ENCODE measurements at regions of chr16 and their contacts with region 1.

Region 1: DNA sequence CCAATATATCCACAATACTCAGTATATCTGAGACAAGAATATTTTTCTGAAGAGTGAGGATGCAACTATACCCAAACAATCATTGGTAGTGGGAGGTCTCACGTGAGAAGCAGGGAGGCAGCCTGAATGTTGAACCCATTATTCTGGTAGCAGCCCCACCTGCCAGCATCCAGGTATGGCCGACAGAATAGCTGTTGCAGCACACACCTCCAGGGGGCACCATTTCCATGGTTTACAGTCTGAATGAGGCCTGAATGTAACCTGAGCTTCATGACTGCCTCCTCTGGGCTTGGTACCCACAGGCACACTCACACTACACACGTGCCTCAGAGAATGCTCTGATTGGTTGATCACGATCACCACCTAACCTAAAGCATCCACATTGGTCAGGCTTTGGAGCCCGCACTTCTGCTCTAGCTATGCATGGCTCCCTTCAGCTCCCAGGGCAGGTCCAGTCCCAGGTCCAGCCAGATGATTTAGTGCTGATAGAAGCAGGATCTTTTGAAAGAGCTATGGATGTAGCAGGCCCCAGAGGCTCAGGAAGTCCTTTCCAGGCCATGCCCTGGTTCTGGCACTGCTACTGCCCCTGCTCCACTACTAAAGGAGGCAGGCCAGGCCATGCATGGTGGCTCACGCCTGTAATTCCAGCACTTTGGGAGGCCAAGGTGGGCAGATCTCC is 11.0 kb upstream of the CBFB start:
- DNase-seq: peak; percentile 96
- H3K4me3 Mint-ChIP-seq: no peak overlapping the region
- H3K27ac Mint-ChIP-seq: no peak overlapping the region
- H3K4me1 Mint-ChIP-seq: peaks cover 5% of the 10 kb centered on the region
- H3K27me3 Mint-ChIP-seq: peaks cover 4% of the 10 kb centered on the region

Region 2: GRCh38 chr16:66954097-66954659 is 63.8 kb before region 1 on chr16:
- CTCF ChIA-PET with region 1: interaction called, 13 read pairs
- intact Hi-C with region 1: loop called (anchors 1 kb)
- DNase-seq: peak; percentile 90
- H3K4me3 Mint-ChIP-seq: no peak overlapping the region
- H3K27ac Mint-ChIP-seq: no peak overlapping the region
- H3K4me1 Mint-ChIP-seq: peaks cover 14% of the 10 kb centered on the region
- H3K27me3 Mint-ChIP-seq: peaks cover 27% of the 10 kb centered on the region

Region 3: GRCh38 chr16:66984892-66985311 is 33.0 kb before region 1 on chr16:
- CTCF ChIA-PET with region 1: interaction called, 22 read pairs
- intact Hi-C with region 1: loop called (anchors 2 kb)
- DNase-seq: peak; percentile 81
- H3K4me3 Mint-ChIP-seq: no peak overlapping the region
- H3K27ac Mint-ChIP-seq: peak overlapping the region; percentile 96
- H3K4me1 Mint-ChIP-seq: peaks cover 30% of the 10 kb centered on the region
- H3K27me3 Mint-ChIP-seq: no peaks in the 10 kb centered on the region

Region 4: GRCh38 chr16:67043420-67043819 is 25.5 kb after region 1 on chr16:
- CTCF ChIA-PET with region 1: interaction called, 10 read pairs
- intact Hi-C with region 1: no loop called
- DNase-seq: no peak
- H3K4me3 Mint-ChIP-seq: no peak overlapping the region
- H3K27ac Mint-ChIP-seq: no peak overlapping the region
- H3K4me1 Mint-ChIP-seq: peaks cover 28% of the 10 kb centered on the region
- H3K27me3 Mint-ChIP-seq: no peaks in the 10 kb centered on the region

Region 5: GRCh38 chr16:67109407-67110135 is 91.6 kb after region 1 on chr16 and contains the start of gene PHAF1:
- CTCF ChIA-PET with region 1: interaction called, 16 read pairs
- intact Hi-C with region 1: loop called (anchors 2 kb)
- DNase-seq: peak; percentile 95
- H3K4me3 Mint-ChIP-seq: peak within 1 kb of the TSS; percentile 94
- H3K27ac Mint-ChIP-seq: no peak within 1 kb of the TSS
- H3K4me1 Mint-ChIP-seq: peaks cover 27% of the 10 kb centered on the region
- H3K27me3 Mint-ChIP-seq: no peaks in the 10 kb centered on the region
- total RNA-seq, gene PHAF1: 7.8 to 8.4 TPM

Region 6: DNA sequence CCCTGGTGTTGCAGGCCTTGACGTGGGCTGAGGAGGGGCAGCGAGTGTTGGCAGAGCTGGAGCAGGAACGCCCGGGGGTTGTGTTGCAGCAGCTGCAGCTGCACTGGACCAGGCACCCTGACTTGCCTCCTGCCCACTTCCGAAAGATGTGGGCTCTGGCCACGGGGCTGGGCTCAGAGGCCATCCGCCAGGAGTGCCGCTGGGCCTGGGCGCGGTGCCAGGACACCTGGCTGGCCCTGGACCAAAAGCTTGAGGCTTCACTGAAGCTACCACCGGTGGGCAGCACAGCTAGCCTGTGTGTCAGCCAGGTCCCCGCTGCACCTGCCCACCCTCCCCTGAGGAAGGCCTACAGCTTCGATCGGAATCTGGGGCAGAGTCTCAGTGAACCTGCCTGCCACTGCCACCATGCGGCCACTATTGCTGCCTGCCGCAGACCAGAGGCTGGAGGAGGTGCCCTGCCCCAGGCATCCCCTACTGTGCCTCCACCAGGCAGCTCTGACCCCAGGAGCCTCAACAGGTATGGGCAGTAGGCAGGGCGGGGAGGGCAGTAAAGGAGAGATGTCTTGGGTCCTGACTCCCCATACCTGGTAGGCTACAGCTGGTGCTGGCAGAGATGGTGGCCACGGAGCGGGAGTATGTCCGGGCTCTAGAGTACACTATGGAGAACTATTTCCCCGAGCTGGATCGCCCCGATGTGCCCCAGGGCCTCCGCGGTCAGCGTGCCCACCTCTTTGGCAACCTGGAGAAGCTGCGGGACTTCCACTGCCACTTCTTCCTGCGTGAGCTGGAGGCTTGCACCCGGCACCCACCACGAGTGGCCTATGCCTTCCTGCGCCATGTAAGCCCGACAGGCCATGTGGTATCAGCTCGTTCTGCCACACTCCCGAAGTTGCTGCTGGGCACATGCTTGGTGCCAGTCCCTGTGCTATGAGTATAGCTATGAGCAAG is 267.0 kb after region 1 on chr16:
- CTCF ChIA-PET with region 1: no interaction called
- intact Hi-C with region 1: no loop called
- DNase-seq: no peak
- H3K4me3 Mint-ChIP-seq: no peak overlapping the region
- H3K27ac Mint-ChIP-seq: no peak overlapping the region
- H3K4me1 Mint-ChIP-seq: no peaks in the 10 kb centered on the region
- H3K27me3 Mint-ChIP-seq: no peaks in the 10 kb centered on the region

Region 7: DNA sequence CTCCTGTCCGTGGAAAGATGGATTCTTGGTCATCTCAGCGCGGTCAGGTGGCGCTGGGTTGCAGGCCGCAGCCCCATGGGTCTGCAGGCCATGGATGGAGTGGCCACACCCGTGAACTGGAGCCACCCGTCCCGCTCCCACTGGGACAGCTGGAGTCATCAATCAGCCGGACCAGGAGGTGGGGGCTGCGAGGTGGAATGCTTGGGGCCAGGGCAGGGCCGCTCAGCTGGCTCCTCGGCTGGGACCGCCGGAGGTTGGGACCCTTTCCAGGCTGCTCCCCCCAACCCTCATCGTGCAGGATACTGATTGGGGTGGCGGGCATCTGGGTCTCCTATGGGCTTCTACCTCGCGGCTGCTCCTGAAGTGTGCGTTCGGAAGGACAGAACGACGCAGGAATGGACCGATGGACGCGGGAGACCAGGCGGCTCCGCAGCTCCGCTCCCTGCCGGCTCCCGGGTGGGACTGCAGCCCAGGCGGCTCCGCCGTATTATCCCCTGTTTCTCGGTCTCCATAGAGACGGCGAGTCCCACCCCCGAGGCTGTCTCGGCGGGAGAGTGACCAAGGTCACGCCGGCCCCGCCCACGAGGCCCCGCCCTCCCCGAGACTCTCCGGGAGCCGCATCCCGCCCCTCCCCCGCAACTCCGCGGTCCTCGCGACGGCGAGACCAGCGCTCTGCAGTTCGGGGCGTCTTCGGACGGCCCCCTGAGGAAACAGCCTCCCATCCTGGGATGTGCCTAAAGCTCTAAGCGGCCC is 375.3 kb after region 1 on chr16 and contains the start of gene TPPP3:
- CTCF ChIA-PET with region 1: no interaction called
- intact Hi-C with region 1: loop called (anchors 1 kb)
- DNase-seq: peak; percentile 47
- H3K4me3 Mint-ChIP-seq: peak within 1 kb of the TSS; percentile 15
- H3K27ac Mint-ChIP-seq: no peak within 1 kb of the TSS
- H3K4me1 Mint-ChIP-seq: peaks cover 7% of the 10 kb centered on the region
- H3K27me3 Mint-ChIP-seq: peaks cover 20% of the 10 kb centered on the region
- total RNA-seq, gene TPPP3: not detected

Region 8: DNA sequence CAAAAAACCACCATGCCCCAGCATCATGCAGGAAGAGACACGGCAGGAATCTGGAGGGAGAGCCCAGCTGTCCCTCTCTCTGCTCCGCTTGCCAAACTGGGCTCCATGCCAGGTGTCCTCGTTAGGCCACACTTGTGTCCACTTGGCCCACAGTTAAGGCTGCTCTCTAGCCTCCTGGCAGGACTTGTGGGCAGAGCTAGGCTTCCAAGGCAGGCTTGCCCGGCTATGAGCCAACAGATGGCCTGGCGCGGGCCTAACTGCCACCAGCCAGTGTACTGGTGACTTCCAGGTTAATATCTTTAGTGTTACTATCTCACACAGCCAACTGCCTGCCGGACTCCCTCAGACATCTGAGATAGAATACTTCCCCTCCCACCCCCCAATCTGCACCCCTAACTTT is 452.4 kb after region 1 on chr16:
- CTCF ChIA-PET with region 1: no interaction called
- intact Hi-C with region 1: no loop called
- DNase-seq: no peak
- H3K4me3 Mint-ChIP-seq: no peak overlapping the region
- H3K27ac Mint-ChIP-seq: no peak overlapping the region
- H3K4me1 Mint-ChIP-seq: peaks cover 31% of the 10 kb centered on the region
- H3K27me3 Mint-ChIP-seq: no peaks in the 10 kb centered on the region